ENCODE measurements at regions of chr20 and their contacts with region 1.

Region 1: DNA sequence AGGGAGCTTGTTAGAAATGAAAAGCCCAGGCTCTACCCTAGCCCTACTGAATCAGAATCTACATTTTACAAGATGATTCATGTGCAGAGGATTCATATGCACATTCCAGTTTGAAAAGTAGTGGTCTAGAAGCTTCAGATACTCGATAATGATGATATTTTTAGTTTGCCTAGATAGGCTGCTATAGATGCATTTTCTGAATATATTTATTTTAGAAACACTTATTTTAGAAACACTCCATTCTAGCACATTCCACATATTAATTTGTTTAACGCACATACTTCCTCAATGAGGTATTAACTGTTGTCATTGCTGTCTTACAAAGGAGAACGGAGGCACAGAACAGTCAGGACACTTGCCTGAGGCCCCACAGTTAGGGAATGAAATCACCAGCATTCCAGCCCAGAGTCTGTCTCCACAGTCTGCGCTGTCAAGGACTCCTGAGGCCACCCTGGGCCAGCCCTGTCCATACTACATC is 64.4 kb downstream of the SNAP25 start:
- DNase-seq: peak; percentile 1
- H3K4me3 ChIP-seq: no peak overlapping the region
- H3K27ac ChIP-seq: no peak overlapping the region
- H3K4me1 ChIP-seq: peaks cover 11% of the 10 kb centered on the region
- H3K27me3 ChIP-seq: no peaks in the 10 kb centered on the region
- CTCF ChIP-seq: no peak

Region 2: GRCh38 chr20:10231290-10231689 is 51.7 kb before region 1 on chr20:
- CTCF ChIA-PET with region 1: no interaction called
- dilution Hi-C with region 1: loop called (anchors 5 kb)
- in situ Hi-C with region 1: no loop called
- intact Hi-C with region 1: no loop called
- DNase-seq: no peak
- H3K4me3 ChIP-seq: no peak overlapping the region
- H3K27ac ChIP-seq: no peak overlapping the region
- H3K4me1 ChIP-seq: peaks cover 5% of the 10 kb centered on the region
- H3K27me3 ChIP-seq: no peaks in the 10 kb centered on the region
- CTCF ChIP-seq: no peak